ENCODE measurements at regions of chr1 and their contacts with region 1.

Region 1: GRCh38 chr1:54581621-54582035 is 33.6 kb downstream of the ACOT11 start:
- DNase-seq: peak; percentile 91 to 97 (median 96)
- ATAC-seq: peak; percentile 91 to 95
- H3K4me3 ChIP-seq: no peak overlapping the region
- H3K27ac ChIP-seq: peak overlapping the region; percentile 82
- H3K4me1 ChIP-seq: peaks cover 19% of the 10 kb centered on the region
- H3K27me3 ChIP-seq: no peaks in the 10 kb centered on the region

Region 2: DNA sequence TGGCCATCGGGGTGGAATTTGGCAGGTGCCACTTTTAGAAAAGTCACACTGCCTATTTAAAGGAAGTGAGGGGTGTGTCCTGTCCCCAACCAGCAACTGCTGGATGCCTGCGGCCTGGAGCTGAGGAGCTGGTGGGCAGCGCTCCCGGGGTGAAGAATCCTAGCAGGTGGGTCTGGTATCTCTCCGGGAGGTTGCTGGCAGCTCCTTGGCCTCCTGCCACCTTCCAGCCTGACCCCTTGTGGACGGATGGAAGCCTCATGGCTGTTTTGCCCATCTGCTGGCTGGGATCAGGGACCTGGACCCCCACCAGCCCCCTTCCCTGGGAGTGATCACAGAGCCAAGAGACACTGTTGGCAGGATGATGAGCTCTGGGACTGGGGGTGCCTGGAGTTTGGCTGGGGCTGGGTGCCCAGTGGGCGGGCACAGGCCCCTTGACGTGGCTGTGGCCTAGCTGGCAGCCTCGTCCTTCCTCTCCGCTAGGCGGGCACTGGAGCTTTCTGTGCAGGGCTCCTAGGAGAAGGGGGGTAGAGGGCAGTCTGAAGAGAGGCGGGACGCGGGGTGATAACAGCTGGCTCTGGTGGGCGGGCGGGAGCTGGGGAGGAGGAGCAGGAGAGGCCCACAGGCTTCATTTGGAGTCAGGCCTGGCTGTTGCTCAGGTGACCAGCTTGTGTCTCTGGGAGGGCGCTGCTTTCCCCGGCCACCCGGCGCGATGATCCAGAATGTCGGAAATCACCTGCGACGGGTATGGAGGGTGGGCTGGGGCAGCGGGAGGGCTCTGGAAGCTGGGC is 33.8 kb before region 1 on chr1 and contains the start of gene ACOT11:
- intact Hi-C with region 1: loop called in 1 of 4 experiments (anchors 5 kb)
- DNase-seq: peak; percentile 87 to 95 (median 94)
- ATAC-seq: peak; percentile 93 to 94
- H3K4me3 ChIP-seq: peak within 1 kb of the TSS; percentile 11
- H3K27ac ChIP-seq: peak within 1 kb of the TSS; percentile 86
- H3K4me1 ChIP-seq: peaks cover 4% of the 10 kb centered on the region
- H3K27me3 ChIP-seq: no peaks in the 10 kb centered on the region
- total RNA-seq, gene ACOT11: 14.4 to 32.7 (median 28.7) TPM

Region 3: DNA sequence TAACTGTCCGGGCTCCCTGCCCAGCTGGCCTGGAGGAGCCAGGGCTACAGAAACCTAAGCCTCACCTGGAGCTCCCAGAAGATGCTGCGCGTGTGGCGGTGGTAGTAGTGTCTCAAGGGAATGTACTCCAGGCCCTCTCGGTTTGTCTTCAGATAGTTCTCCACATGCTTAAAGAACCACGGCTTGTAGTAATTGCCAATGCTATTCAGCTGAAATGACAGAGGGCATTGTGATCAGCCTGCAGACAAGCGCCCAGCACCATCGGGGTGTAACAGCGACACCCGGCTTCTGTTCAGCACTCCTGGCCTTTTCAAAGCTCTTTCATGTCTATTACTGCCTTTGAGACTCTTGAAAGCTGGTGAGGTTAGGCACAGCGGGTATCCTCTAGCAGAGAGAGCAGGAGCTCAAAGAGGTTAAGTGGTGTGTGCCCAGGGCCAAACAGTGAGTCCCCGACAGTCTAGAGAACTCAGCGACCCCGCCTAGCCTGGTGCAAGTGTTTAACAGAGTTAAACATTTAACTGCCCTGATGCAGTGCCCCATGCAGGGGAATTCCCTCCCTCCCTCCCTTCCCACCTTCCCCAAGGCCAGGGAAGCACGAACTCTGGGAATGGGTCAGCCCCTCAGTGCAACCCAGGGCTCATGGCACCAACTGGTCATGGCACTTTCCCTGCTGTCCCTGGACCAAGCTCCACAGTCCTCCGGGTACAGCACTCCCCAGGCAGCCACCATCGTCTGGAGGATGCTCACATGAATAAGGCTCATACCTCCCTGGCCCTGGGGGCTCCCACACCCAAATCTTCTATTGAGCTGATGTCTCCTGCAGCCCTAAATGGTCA is 283.8 kb after region 1 on chr1:
- intact Hi-C with region 1: no loop called
- DNase-seq: no peak
- ATAC-seq: no peak
- H3K4me3 ChIP-seq: no peak overlapping the region
- H3K27ac ChIP-seq: no peak overlapping the region
- H3K4me1 ChIP-seq: peaks cover 8% of the 10 kb centered on the region
- H3K27me3 ChIP-seq: no peaks in the 10 kb centered on the region

Measured in right cardiac atrium (tissue), 5 donors.